Activated CD4-positive, alpha-beta memory T cell treated with anti-CD3 and anti-CD28 coated beads for 36 hours (primary cell): ENCODE measurements at regions of chr5 and their contacts with region 1.

Region 1: DNA sequence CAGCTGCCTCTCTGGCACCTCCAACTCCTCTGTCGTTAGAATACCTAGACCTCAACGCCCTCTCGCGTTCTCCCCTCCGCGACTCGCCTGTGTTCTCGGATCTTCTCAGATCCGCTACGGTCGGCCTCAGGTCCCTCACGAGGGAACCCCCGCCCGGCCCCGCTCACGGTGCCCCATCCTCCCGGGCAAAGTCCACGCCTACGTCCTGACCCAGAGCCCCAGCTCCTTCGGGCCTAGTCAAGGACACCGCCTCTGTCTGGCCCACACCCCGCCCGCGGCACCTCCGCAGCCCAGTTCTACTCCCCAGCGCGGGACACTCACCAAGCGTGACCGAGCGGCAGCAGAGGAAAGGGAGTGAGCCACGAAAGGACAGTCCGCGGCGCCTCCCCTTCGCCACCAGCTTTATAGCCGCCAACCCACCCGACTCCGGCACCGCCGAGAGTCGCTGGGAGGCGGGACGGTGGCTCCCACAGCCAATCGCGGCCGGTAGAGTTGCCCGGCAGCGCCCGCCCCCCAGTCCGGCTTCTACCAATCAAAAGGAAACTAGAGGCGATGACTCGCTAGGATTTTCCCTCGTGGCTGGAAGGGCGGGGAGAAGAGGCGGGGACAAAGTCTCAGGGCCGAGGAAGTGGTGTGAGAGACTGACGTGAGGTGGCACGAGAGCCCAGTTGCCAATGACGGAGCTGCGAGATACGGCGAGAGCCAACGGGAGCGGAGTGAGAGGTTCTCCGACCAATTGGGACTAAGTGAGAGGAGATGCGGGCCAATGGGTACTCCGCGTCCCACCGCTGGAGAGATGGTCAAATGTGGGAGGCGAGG is at the start of gene HMGCS1:
- DNase-seq: peak; percentile 99
- H3K4me3 Mint-ChIP-seq: peak within 1 kb of the TSS; percentile 96
- H3K27ac Mint-ChIP-seq: peak within 1 kb of the TSS; percentile 94
- H3K4me1 Mint-ChIP-seq: peaks cover 72% of the 10 kb centered on the region
- H3K27me3 Mint-ChIP-seq: peaks cover 2% of the 10 kb centered on the region
- total RNA-seq, gene HMGCS1: 158 to 162 TPM

Region 2: GRCh38 chr5:42840269-42840668 is 473.0 kb before region 1 on chr5:
- CTCF ChIA-PET with region 1: no interaction called
- POLR2A ChIA-PET with region 1: no interaction called
- intact Hi-C with region 1: no loop called
- DNase-seq: no peak
- H3K4me3 Mint-ChIP-seq: no peak overlapping the region
- H3K27ac Mint-ChIP-seq: no peak overlapping the region
- H3K4me1 Mint-ChIP-seq: no peaks in the 10 kb centered on the region
- H3K27me3 Mint-ChIP-seq: no peaks in the 10 kb centered on the region

Region 3: DNA sequence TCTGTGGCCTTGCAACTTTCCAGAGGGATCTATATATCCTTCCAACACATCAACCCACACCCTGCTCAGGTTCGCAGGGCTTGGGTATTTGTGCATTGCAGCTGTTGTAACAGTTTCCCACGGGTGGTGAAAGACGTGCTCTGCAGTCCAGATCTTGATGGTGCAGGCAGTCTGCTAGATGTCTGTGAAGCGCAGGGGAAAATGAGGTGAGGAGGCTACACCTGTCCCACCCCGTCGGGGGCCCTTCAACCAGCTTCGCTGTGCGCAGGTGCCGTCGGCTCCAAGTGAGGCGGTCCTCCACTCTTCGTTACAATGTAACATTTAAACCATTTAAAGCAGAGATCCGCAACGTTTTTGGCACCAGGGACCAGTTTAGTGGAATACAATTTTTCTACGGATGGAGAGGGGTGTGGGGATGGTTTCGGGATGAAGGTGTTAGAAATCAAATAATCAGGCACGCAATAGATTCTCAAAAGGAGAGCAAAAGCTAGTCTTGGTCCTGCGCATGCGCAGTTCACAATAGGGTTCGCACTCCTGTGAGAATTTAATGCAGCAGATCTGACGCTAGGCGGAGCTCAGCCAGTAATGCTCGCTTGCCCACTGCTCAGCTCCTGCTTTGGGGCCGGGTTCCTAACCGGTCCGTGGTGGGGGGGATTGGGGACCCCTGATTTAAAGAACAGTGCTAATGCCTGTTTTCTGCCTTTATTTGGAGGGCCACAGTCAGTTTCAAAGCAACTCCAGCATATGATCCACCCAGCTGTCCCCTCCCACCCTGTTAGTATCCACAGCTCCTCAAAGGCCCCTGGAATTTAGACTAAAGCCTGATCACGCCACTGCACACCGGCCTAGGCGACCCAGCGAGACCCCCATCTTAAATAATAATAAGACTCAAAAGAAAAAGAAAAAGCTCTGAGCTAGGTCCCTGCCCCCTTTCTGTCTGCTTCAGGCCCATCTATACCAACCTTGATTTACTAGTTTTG is 404.4 kb before region 1 on chr5:
- CTCF ChIA-PET with region 1: no interaction called
- POLR2A ChIA-PET with region 1: no interaction called
- intact Hi-C with region 1: loop called (anchors 5 kb)
- DNase-seq: peak; percentile 93
- H3K4me3 Mint-ChIP-seq: peak overlapping the region; percentile 82
- H3K27ac Mint-ChIP-seq: peak overlapping the region; percentile 70
- H3K4me1 Mint-ChIP-seq: peaks cover 10% of the 10 kb centered on the region
- H3K27me3 Mint-ChIP-seq: peaks cover 10% of the 10 kb centered on the region

Region 4: GRCh38 chr5:43008369-43009153 is 304.7 kb before region 1 on chr5:
- CTCF ChIA-PET with region 1: no interaction called
- POLR2A ChIA-PET with region 1: interaction called, 3 read pairs
- intact Hi-C with region 1: loop called (anchors 5 kb)
- DNase-seq: peak; percentile 93
- H3K4me3 Mint-ChIP-seq: peak overlapping the region; percentile 81
- H3K27ac Mint-ChIP-seq: peak overlapping the region; percentile 88
- H3K4me1 Mint-ChIP-seq: peaks cover 26% of the 10 kb centered on the region
- H3K27me3 Mint-ChIP-seq: no peaks in the 10 kb centered on the region

Region 5: GRCh38 chr5:43191740-43192557 is 121.3 kb before region 1 on chr5 and contains the start of gene NIM1K:
- CTCF ChIA-PET with region 1: no interaction called
- POLR2A ChIA-PET with region 1: interaction called, 5 read pairs
- intact Hi-C with region 1: loop called (anchors 1 kb)
- DNase-seq: peak; percentile 62
- H3K4me3 Mint-ChIP-seq: peak within 1 kb of the TSS; percentile 78
- H3K27ac Mint-ChIP-seq: no peak within 1 kb of the TSS
- H3K4me1 Mint-ChIP-seq: peaks cover 31% of the 10 kb centered on the region
- H3K27me3 Mint-ChIP-seq: peaks cover 16% of the 10 kb centered on the region
- total RNA-seq, gene NIM1K: 0.75 to 1.00 TPM

Region 6: GRCh38 chr5:43336159-43336558 is 22.9 kb after region 1 on chr5:
- CTCF ChIA-PET with region 1: no interaction called
- POLR2A ChIA-PET with region 1: interaction called, 7 read pairs
- intact Hi-C with region 1: loop called (anchors 1 kb)
- DNase-seq: peak; percentile 44
- H3K4me3 Mint-ChIP-seq: no peak overlapping the region
- H3K27ac Mint-ChIP-seq: peak overlapping the region; percentile 54
- H3K4me1 Mint-ChIP-seq: peaks cover 15% of the 10 kb centered on the region
- H3K27me3 Mint-ChIP-seq: peaks cover 29% of the 10 kb centered on the region

Region 7: GRCh38 chr5:43514816-43515677 is 201.8 kb after region 1 on chr5 and contains the start of gene C5orf34:
- CTCF ChIA-PET with region 1: no interaction called
- POLR2A ChIA-PET with region 1: no interaction called
- intact Hi-C with region 1: loop called (anchors 1 kb)
- DNase-seq: peak; percentile 97
- H3K4me3 Mint-ChIP-seq: peak within 1 kb of the TSS; percentile 95
- H3K27ac Mint-ChIP-seq: peak within 1 kb of the TSS; percentile 99
- H3K4me1 Mint-ChIP-seq: peaks cover 26% of the 10 kb centered on the region
- H3K27me3 Mint-ChIP-seq: no peaks in the 10 kb centered on the region
- total RNA-seq, gene C5orf34: 11.8 to 13.1 TPM

Region 8: DNA sequence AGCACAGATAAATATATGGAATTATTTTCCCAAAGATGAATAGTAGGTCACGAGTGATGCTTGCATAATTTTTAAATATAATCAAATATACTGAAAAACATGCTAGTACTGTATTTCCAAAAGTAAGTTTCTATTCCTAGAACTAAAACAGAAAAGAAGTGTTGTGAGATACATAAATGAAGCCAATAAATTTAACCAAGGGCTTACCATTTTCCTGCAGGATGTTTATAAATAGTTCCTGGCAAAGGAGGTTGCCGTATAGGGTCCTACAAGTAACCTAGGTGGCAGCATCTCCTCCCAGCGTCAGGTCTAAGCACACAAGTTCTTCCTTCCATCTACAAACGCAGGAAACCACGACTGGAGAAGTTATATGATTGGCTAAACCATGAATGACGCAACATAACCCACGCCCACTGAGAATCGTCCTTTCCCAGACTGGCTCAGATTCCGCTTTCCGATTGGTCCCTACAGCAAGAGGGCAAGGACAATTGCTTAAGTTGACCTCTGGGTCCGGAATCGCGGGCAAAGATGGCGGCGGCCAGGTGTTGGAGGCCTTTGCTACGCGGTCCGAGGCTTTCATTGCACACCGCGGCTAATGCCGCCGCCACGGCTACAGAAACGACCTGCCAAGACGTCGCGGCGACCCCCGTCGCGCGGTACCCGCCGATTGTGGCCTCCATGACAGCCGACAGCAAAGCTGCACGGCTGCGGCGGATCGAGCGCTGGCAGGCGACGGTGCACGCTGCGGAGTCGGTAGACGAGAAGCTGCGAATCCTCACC is 1495.4 kb after region 1 on chr5 and contains the start of gene MRPS30:
- CTCF ChIA-PET with region 1: no interaction called
- POLR2A ChIA-PET with region 1: no interaction called
- intact Hi-C with region 1: loop called (anchors 5 kb)
- DNase-seq: peak; percentile 94
- H3K4me3 Mint-ChIP-seq: peak within 1 kb of the TSS; percentile 99
- H3K27ac Mint-ChIP-seq: peak within 1 kb of the TSS; percentile 98
- H3K4me1 Mint-ChIP-seq: peaks cover 29% of the 10 kb centered on the region
- H3K27me3 Mint-ChIP-seq: peaks cover 1% of the 10 kb centered on the region
- total RNA-seq, gene MRPS30: 47.1 to 49.3 TPM